K562 (cell line): ENCODE measurements at regions of chr19 and their contacts with region 1.

Region 1: GRCh38 chr19:14786421-14786851 is 8.1 kb upstream of the ADGRE2 start:
- DNase-seq: peak; percentile 68 to 74 (median 73)
- ATAC-seq: peak; percentile 72
- H3K4me3 ChIP-seq: 0 out of 2 replicates have a peak overlapping the region, but pooled peaks have one; percentile 5
- H3K27ac ChIP-seq: no peak overlapping the region; the same call in 2 of the 3 replicates
- H3K4me1 ChIP-seq: peaks cover 23 to 27% of the 10 kb centered on the region in 2 experiments
- H3K27me3 ChIP-seq: no peaks in the 10 kb centered on the region
- CTCF ChIP-seq: peak; percentile 82 to 95 (median 92)
- EP300 ChIP-seq: no peak
- POLR2A ChIP-seq: no peak
- RAD21 ChIP-seq: peak; percentile 84

Region 2: DNA sequence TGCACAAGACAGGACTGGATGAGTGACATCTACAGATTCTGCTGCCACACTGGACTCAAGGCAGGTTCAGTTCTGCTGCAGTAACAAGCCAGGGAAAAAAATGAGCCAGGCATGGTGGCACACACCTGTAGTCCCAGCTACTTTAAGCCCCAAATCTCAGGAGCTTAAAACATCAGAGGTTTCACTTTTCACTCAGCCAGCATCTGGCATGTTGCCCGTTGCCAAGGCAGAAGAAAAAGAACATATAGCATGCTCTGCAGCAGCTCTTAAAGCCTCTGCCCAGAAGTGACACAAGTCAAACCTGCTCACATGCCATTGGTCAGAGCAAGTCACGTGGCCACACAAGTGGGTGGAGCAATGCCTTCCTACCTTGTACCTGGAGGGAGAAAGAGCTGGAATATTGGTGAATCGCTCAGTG is 419.9 kb before region 1 on chr19:
- CTCF ChIA-PET with region 1: no interaction called
- POLR2A ChIA-PET with region 1: no interaction called
- in situ Hi-C with region 1: loop called (anchors 5 kb)
- intact Hi-C with region 1: no loop called
- DNase-seq: peak; percentile 77 to 88 (median 84)
- ATAC-seq: peak; percentile 69
- H3K4me3 ChIP-seq: no peak overlapping the region
- H3K27ac ChIP-seq: 0 out of 3 replicates have a peak overlapping the region, but pooled peaks have one; percentile 39
- H3K4me1 ChIP-seq: peaks cover 44 to 53% of the 10 kb centered on the region in 2 experiments
- H3K27me3 ChIP-seq: no peaks in the 10 kb centered on the region
- CTCF ChIP-seq: no peak
- EP300 ChIP-seq: no peak
- POLR2A ChIP-seq: no peak
- RAD21 ChIP-seq: no peak

Region 3: GRCh38 chr19:14571695-14572490 is 214.5 kb before region 1 on chr19 and contains the start of gene NDUFB7:
- CTCF ChIA-PET with region 1: interaction called, 3 read pairs
- POLR2A ChIA-PET with region 1: no interaction called
- in situ Hi-C with region 1: loop called (anchors 10 kb)
- intact Hi-C with region 1: loop called (anchors 2 kb)
- DNase-seq: peak; percentile 87 to 98 (median 88)
- ATAC-seq: peak; percentile 94
- H3K4me3 ChIP-seq: peak within 1 kb of the TSS; percentile 86
- H3K27ac ChIP-seq: peak within 1 kb of the TSS; percentile 80
- H3K4me1 ChIP-seq: peaks cover 10 to 52% of the 10 kb centered on the region in 2 experiments; a peak in 4 of 5 replicates
- H3K27me3 ChIP-seq: no peaks in the 10 kb centered on the region; a peak in 1 of 5 replicates
- CTCF ChIP-seq: peak; percentile 85 to 91 (median 88)
- EP300 ChIP-seq: no peak
- POLR2A ChIP-seq: peak; percentile 91
- RAD21 ChIP-seq: peak; percentile 34 to 42; a peak in 3 of 4 replicates
- polyA plus RNA-seq, gene NDUFB7: 31.3 to 91.8 TPM

Region 4: DNA sequence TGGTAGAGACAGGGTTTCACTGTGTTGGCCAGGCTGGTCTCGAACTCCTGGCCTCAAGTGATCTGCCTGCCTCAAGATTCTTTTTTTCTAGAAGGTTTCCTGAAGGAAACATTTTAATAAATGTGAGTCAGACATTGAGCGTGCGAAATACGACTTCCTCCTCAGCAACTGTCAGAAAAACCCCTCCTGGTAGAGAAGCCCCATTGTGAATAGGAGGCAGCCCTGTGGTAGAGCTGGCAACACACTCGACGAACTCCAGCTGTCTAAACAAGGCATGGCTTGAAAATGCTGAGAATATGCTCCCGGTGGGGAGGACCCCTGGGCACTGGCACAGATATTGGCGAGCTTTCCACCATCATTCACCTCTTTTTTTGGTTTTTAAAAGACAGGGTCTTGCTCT is 86.8 kb before region 1 on chr19:
- CTCF ChIA-PET with region 1: no interaction called
- POLR2A ChIA-PET with region 1: no interaction called
- in situ Hi-C with region 1: no loop called
- intact Hi-C with region 1: no loop called
- DNase-seq: no peak
- ATAC-seq: no peak
- H3K4me3 ChIP-seq: no peak overlapping the region
- H3K27ac ChIP-seq: no peak overlapping the region
- H3K4me1 ChIP-seq: no peaks in the 10 kb centered on the region; a peak in 1 of 5 replicates
- H3K27me3 ChIP-seq: no peaks in the 10 kb centered on the region
- CTCF ChIP-seq: no peak
- EP300 ChIP-seq: no peak
- POLR2A ChIP-seq: no peak
- RAD21 ChIP-seq: no peak

Region 5: DNA sequence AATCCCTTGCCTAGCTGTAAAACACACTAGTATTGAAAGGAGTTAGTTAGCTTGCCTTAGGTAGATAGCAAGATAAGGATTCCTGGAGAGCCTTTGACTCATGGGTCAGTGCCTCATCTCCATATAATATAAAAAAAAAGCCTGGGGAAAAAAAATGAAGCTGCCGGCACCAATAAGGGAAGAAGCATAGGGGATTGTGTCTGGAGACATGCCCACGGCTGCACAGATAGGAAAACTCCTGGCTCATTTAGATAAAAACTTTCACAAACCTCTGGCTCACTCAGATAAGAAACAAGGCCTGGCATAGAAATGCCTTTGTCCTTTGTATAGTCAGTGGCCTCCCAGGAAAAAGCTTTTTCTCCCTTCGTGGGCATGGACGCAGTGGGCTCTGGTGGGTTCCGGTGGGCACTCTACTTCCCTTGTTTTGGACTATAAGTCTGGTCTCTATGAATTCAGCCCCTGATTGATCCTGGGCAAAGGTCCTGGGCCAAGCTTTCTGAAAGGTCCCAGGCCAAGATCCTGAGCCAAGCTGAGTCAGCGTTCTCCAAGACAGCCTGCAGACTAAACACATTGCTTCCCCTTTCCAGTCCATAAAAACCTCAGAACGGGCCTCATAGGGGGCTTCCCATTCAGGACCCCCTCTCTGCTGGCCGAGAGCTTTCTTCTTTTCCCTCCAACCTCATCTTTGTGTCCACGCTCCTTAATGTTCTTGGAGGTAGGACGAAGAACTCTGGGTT is 104.4 kb after region 1 on chr19:
- CTCF ChIA-PET with region 1: no interaction called
- POLR2A ChIA-PET with region 1: no interaction called
- in situ Hi-C with region 1: no loop called
- intact Hi-C with region 1: loop called (anchors 1 kb)
- DNase-seq: peak; percentile 25 to 74 (median 44)
- ATAC-seq: peak; percentile 78
- H3K4me3 ChIP-seq: no peak overlapping the region
- H3K27ac ChIP-seq: no peak overlapping the region
- H3K4me1 ChIP-seq: peaks cover 0 to 12% of the 10 kb centered on the region in 2 experiments; a peak in 2 of 5 replicates
- H3K27me3 ChIP-seq: peaks cover 4 to 8% of the 10 kb centered on the region in 2 experiments; a peak in 2 of 5 replicates
- CTCF ChIP-seq: no peak
- EP300 ChIP-seq: peak; percentile 90
- POLR2A ChIP-seq: no peak
- RAD21 ChIP-seq: no peak